ENCODE measurements at regions of chr9 and their contacts with region 1.

Region 1: DNA sequence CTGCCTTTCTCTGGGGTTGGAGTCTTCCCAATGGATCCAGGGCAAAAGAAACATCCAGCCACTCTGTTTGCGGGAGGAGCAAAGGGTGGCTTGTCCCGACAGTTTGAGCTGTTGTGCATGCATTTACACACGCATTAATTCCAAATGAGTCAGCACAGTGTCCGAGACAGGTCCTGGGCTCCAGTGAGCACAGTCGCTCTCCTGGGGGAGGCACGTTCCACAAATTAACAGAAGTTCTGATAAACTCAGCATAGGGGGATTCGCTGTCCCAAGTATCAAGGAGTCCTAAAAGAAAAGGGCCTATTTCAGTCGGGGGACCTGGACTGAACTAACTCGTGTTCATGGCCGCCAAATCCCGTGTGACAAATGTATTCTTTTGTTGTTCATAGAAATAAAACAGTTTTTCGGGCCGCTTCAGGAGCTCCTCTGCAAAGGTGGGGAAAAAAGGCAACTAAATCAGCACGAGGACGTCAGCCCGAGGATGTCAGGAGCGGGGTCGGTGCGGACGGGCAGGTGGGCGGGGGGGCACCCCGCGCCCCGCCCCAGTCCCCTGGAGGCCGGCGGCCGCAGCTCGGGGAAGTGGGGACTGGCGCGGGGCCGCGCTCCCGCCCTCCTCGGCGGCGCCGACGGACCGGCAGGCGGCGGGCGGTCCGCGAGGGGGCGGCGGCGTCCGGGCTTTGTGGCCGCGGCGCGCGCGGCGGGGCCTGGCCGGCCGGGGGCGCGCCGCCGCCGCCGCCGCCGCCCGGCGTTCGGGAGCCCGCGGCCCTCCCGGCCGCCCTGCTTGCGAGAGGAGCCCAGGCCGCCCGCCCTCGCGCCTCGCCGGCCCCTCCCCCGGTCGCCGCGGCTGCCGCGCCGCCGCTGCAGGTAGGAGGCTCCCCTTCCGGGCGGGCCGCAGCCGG is at the start of gene MSANTD3:
- DNase-seq: peak; percentile 58 to 67
- H3K4me3 ChIP-seq: peak within 1 kb of the TSS; percentile 96
- H3K27ac ChIP-seq: peak within 1 kb of the TSS; percentile 89
- H3K4me1 ChIP-seq: peaks cover 40% of the 10 kb centered on the region
- H3K27me3 ChIP-seq: no peaks in the 10 kb centered on the region
- CTCF ChIP-seq: no peak
- total RNA-seq, gene MSANTD3: 40.0 and 53.2 TPM in 2 replicates

Region 2: GRCh38 chr9:99819856-99820684 is 606.7 kb before region 1 on chr9:
- CTCF ChIA-PET with region 1: no interaction called
- POLR2A ChIA-PET with region 1: no interaction called
- intact Hi-C with region 1: loop called (anchors 5 kb)
- DNase-seq: peak; percentile 70 to 89
- H3K4me3 ChIP-seq: peak overlapping the region; percentile 87
- H3K27ac ChIP-seq: peak overlapping the region; percentile 68
- H3K4me1 ChIP-seq: peaks cover 32% of the 10 kb centered on the region
- H3K27me3 ChIP-seq: peaks cover 20% of the 10 kb centered on the region
- CTCF ChIP-seq: no peak

Region 3: DNA sequence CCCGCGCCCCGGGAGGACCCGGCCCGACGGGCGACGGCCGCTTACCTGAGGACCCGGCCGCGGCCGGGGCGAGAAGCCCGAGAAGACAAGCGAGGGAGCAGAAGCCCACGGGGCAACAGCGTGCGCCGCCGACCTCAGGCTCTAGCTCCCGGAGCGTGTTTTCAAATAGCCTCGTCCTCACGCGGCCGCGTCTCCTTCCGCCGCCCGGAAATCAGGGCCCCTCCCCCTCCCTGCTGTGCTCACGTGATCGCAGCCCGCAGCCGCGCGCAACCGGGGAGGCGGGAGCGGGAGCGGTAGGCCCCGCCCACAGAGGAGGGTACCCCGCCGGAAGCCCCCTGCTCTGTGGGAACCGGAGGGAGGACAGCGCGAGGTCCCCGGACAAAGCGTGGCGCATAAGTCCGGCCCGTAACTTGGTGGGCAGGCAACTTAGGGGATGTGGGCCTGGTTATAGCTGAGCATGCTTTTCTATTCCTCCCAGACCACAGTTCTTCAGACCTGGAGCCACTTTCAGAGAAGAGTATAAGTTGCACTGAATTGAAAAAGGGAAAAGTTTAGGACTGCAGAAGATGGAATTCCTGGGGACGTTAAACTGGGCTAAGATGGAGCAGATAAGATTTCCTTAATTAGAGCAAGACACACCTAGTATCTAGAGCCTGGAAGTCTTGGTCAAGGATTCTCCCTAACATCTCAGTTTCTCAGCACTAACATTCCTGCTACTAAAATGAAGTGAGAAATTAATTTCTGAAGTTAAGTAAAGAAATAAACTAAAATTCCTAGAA is 73.9 kb before region 1 on chr9 and contains the start of gene TEX10:
- CTCF ChIA-PET with region 1: interaction called, 5 read pairs
- POLR2A ChIA-PET with region 1: interaction called, 7 read pairs
- intact Hi-C with region 1: loop called (anchors 1 kb)
- DNase-seq: peak; percentile 61 to 90
- H3K4me3 ChIP-seq: peak within 1 kb of the TSS; percentile 90
- H3K27ac ChIP-seq: peak within 1 kb of the TSS; percentile 65
- H3K4me1 ChIP-seq: peaks cover 25% of the 10 kb centered on the region
- H3K27me3 ChIP-seq: no peaks in the 10 kb centered on the region
- CTCF ChIP-seq: no peak
- total RNA-seq, gene TEX10: 21.6 and 29.0 TPM in 2 replicates

Region 4: DNA sequence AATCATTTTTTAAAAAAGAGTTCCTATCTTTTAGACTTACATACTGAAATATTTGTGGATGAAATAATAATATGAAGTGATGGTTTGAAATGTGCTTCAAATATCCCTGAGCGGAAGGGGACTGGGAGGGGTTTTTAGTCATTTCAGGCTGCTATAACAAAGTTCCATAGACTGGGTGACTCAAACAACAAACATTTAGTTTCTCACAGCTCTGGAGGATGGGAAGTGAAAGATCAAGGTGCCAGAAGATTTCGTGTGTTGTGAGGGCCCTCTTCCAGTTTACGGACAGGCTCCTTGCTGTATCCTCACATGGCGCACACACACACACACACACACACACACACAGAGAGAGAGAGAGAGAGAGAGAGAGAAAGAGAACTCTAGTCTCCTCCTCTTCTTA is 46.9 kb before region 1 on chr9:
- CTCF ChIA-PET with region 1: interaction called, 11 read pairs
- POLR2A ChIA-PET with region 1: interaction called, 3 read pairs
- intact Hi-C with region 1: no loop called
- DNase-seq: peak in 1 of 2 experiments; percentile 12
- H3K4me3 ChIP-seq: no peak overlapping the region
- H3K27ac ChIP-seq: peak overlapping the region; percentile 53
- H3K4me1 ChIP-seq: peaks cover 9% of the 10 kb centered on the region; the same call in 1 of the 2 replicates
- H3K27me3 ChIP-seq: no peaks in the 10 kb centered on the region
- CTCF ChIP-seq: no peak

Region 5: GRCh38 chr9:100411472-100412283 is 15.1 kb before region 1 on chr9:
- CTCF ChIA-PET with region 1: no interaction called
- POLR2A ChIA-PET with region 1: interaction called, 13 read pairs
- intact Hi-C with region 1: loop called (anchors 2 kb)
- DNase-seq: peak; percentile 81 to 87
- H3K4me3 ChIP-seq: peak overlapping the region; percentile 55
- H3K27ac ChIP-seq: no peak overlapping the region
- H3K4me1 ChIP-seq: no peaks in the 10 kb centered on the region
- H3K27me3 ChIP-seq: no peaks in the 10 kb centered on the region
- CTCF ChIP-seq: no peak

Region 6: GRCh38 chr9:100437860-100438805 is 11.4 kb after region 1 on chr9:
- CTCF ChIA-PET with region 1: interaction called, 11 read pairs
- POLR2A ChIA-PET with region 1: interaction called, 3 read pairs
- intact Hi-C with region 1: no loop called
- DNase-seq: peak; percentile 56 to 70
- H3K4me3 ChIP-seq: no peak overlapping the region
- H3K27ac ChIP-seq: no peak overlapping the region
- H3K4me1 ChIP-seq: no peaks in the 10 kb centered on the region
- H3K27me3 ChIP-seq: no peaks in the 10 kb centered on the region
- CTCF ChIP-seq: peak; percentile 96

Region 7: DNA sequence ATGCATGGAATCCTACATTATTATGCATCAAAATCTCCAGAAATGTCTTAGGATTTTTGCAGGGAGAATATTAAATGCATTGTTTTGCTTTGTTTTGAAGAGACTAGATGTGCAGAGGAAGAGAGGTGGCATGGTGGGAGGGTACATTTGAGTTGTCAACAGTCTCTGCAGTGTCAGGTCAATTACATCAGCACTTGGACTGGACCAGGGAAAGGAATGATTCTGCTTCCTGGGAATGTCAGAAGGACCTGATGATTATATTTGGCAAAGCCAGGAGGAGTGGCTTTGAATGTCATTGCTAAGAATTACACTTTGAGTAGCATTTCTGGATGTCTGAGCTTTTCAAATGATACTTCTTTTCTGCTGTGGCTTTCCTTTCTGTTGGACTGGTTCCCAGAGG is 28.7 kb after region 1 on chr9:
- CTCF ChIA-PET with region 1: interaction called, 13 read pairs
- POLR2A ChIA-PET with region 1: no interaction called
- intact Hi-C with region 1: no loop called
- DNase-seq: no peak
- H3K4me3 ChIP-seq: no peak overlapping the region
- H3K27ac ChIP-seq: no peak overlapping the region
- H3K4me1 ChIP-seq: no peaks in the 10 kb centered on the region
- H3K27me3 ChIP-seq: no peaks in the 10 kb centered on the region
- CTCF ChIP-seq: no peak

Region 8: GRCh38 chr9:100477241-100477640 is 50.5 kb after region 1 on chr9:
- CTCF ChIA-PET with region 1: no interaction called
- POLR2A ChIA-PET with region 1: no interaction called
- intact Hi-C with region 1: no loop called
- DNase-seq: no peak
- H3K4me3 ChIP-seq: no peak overlapping the region
- H3K27ac ChIP-seq: no peak overlapping the region
- H3K4me1 ChIP-seq: no peaks in the 10 kb centered on the region
- H3K27me3 ChIP-seq: no peaks in the 10 kb centered on the region
- CTCF ChIP-seq: no peak

Measured in PC-9 (cell line).